ENCODE measurements at regions of chr2 and their contacts with region 1.

Region 1: GRCh38 chr2:54838585-54839035 is 115.1 kb downstream of the EML6 start:
- DNase-seq: peak; percentile 26
- H3K4me3 Mint-ChIP-seq: no peak overlapping the region
- H3K27ac Mint-ChIP-seq: no peak overlapping the region
- H3K4me1 Mint-ChIP-seq: no peaks in the 10 kb centered on the region
- H3K27me3 Mint-ChIP-seq: peaks cover 5% of the 10 kb centered on the region

Region 2: GRCh38 chr2:54665436-54665856 is 173.2 kb before region 1 on chr2:
- intact Hi-C with region 1: loop called (anchors 1 kb)
- DNase-seq: no peak
- H3K4me3 Mint-ChIP-seq: no peak overlapping the region
- H3K27ac Mint-ChIP-seq: no peak overlapping the region
- H3K4me1 Mint-ChIP-seq: peaks cover 10% of the 10 kb centered on the region
- H3K27me3 Mint-ChIP-seq: no peaks in the 10 kb centered on the region

Region 3: DNA sequence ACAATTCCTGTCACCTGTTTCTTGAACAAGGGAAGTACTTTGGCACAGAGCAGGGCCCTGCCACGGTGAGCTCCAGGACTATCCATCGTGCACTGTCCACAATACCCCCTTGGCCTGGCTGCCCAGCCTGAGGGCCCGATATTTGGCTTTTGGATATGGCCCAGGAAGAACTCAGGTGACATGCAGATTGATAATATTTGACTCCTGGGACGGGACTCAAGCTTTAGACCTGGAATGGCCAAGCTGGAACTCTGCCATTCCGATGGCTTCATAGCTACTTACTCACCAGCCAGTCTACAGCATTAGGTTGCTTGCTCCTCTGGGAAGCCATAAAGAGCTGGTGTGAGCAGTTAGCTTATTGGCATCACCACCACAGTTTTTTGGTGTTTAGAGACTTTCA is 88.6 kb before region 1 on chr2:
- intact Hi-C with region 1: no loop called
- DNase-seq: no peak
- H3K4me3 Mint-ChIP-seq: no peak overlapping the region
- H3K27ac Mint-ChIP-seq: no peak overlapping the region
- H3K4me1 Mint-ChIP-seq: no peaks in the 10 kb centered on the region
- H3K27me3 Mint-ChIP-seq: peaks cover 5% of the 10 kb centered on the region

Region 4: DNA sequence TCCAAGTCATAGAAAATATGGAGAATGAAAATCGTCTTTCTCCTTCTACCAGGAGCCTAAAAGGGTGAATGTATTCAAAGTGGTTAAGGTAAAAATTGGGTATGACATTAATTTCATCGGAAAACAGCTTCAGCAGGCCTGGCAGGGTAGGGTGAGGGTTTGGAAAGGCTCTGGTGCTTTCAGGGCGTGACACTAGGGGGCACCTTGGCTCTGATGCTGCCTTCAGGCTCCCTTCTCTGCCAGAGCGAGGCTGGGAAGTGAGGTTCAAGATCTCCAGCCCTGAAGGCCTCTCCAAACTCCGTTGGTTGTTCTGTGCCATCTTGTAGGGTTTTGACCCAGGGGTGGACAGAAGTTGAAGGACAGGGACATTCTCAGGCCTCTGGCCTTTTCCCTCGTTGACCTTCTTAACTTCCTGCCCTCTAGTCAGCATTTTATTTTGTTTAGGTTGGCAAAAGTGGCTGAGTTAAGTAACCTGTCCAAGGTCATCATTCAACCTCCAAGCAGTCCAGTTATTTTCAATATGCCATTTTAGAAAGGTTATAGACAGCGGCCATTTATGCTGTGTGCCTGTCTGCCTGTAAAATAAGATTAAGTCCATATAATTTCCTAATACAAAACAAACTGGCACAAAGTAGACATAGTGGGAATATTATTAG is 74.8 kb before region 1 on chr2:
- intact Hi-C with region 1: loop called (anchors 2 kb)
- DNase-seq: no peak
- H3K4me3 Mint-ChIP-seq: no peak overlapping the region
- H3K27ac Mint-ChIP-seq: no peak overlapping the region
- H3K4me1 Mint-ChIP-seq: peaks cover 10% of the 10 kb centered on the region
- H3K27me3 Mint-ChIP-seq: peaks cover 7% of the 10 kb centered on the region

Region 5: DNA sequence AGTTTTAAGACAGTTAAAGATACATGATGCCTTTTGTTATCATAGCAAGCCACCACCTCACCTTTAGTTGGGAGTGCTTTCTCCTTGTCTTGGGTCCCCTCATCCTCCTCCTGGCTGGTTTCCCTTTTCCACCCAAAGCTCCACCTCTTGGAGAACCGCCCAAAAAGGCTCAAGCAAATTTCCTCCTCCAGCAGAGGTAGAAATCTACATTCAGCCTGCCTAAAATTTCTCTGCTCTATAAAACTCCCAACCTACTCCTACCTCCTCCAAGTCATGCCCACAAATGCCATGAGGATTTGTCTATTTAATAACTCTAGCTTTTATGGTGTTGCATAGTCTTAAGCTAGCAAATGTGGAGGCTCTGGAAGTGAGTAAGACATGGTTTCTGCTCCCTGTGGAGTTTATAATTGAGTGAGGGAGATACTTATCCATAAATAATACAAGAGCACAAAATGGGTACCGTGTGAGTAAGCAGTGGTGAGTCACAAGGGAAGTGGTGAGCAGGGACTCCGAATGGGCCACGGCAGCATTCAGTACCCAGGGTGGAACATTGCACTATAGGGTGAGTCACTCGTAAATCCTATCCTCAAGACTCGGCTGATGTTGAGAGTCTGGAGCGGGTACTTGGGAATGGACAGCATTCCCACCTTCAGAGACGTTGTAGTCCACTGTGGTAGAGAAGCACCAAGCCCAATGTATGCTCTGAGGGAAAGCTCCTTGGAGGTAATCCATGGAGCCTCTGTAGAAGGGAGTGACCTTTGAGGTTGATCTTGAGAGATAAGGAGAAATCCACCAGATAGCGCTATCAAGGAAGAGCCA is 65.3 kb after region 1 on chr2:
- intact Hi-C with region 1: no loop called
- DNase-seq: peak; percentile 37
- H3K4me3 Mint-ChIP-seq: no peak overlapping the region
- H3K27ac Mint-ChIP-seq: peak overlapping the region; percentile 7
- H3K4me1 Mint-ChIP-seq: peaks cover 10% of the 10 kb centered on the region
- H3K27me3 Mint-ChIP-seq: peaks cover 8% of the 10 kb centered on the region